ENCODE measurements at regions of chr14 and their contacts with region 1.

Region 1: DNA sequence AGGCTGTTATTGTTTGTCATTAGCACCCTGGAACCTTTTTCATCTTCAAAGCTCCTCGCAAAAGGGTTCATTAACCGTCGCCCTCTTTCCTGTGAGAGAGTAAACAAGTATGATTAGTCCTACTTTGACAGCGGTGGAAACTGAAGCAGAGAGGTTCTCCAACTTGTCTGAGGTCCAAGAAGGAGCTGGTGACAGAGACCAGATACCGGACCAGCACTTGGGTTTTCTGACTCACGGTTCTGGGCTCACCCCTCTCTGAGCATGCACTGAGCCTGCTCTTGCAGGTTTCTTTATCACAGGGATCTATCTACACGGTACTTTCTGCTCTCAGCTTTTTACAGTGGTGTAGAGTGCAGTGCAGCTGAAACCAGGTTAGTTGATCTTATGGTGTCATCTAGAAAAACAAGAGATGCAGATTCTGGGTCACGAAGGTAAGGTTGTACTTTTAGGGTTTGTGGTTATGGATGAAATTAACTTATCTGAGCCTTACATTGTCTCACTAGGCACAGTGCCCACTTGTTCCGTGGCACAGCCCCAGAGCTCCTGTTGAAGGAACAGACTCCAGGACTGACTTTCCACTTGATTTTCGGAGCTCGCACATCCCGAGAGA is 62.1 kb downstream of the PPP2R5C start:
- DNase-seq: peak; percentile 74
- H3K4me3 Mint-ChIP-seq: peak overlapping the region; percentile 78
- H3K27ac Mint-ChIP-seq: peak overlapping the region; percentile 98
- H3K4me1 Mint-ChIP-seq: peaks cover 84% of the 10 kb centered on the region
- H3K27me3 Mint-ChIP-seq: no peaks in the 10 kb centered on the region

Region 2: GRCh38 chr14:101235335-101236103 is 588.1 kb before region 1 on chr14:
- intact Hi-C with region 1: no loop called
- DNase-seq: no peak
- H3K4me3 Mint-ChIP-seq: no peak overlapping the region
- H3K27ac Mint-ChIP-seq: no peak overlapping the region
- H3K4me1 Mint-ChIP-seq: no peaks in the 10 kb centered on the region
- H3K27me3 Mint-ChIP-seq: no peaks in the 10 kb centered on the region

Region 3: DNA sequence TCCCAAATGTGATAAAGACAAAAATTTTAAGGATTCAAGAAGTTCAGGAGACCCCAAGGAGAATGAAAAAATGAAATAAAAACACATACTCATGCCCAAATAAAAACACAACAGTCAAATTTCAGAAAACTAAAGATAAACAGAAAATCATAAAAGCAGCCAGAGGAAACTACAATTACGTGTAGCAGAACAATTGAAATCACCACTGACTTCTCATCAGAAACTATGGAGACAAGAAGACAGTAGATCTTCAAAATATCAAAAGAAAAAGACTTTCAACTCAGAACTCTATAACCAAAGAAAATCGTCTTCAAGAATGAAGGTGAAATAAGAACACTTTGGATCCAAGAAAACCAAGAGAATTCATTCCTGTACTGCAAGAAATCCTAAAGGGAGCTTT is 207.4 kb before region 1 on chr14:
- intact Hi-C with region 1: no loop called
- DNase-seq: no peak
- H3K4me3 Mint-ChIP-seq: no peak overlapping the region
- H3K27ac Mint-ChIP-seq: no peak overlapping the region
- H3K4me1 Mint-ChIP-seq: no peaks in the 10 kb centered on the region
- H3K27me3 Mint-ChIP-seq: peaks cover 36% of the 10 kb centered on the region

Region 4: GRCh38 chr14:101628471-101628966 is 195.1 kb before region 1 on chr14:
- intact Hi-C with region 1: no loop called
- DNase-seq: peak; percentile 64
- H3K4me3 Mint-ChIP-seq: no peak overlapping the region
- H3K27ac Mint-ChIP-seq: no peak overlapping the region
- H3K4me1 Mint-ChIP-seq: no peaks in the 10 kb centered on the region
- H3K27me3 Mint-ChIP-seq: peaks cover 6% of the 10 kb centered on the region

Region 5: GRCh38 chr14:101731187-101732080 is 92.2 kb before region 1 on chr14:
- intact Hi-C with region 1: loop called (anchors 1 kb)
- DNase-seq: peak; percentile 79
- H3K4me3 Mint-ChIP-seq: peak overlapping the region; percentile 51
- H3K27ac Mint-ChIP-seq: peak overlapping the region; percentile 82
- H3K4me1 Mint-ChIP-seq: peaks cover 59% of the 10 kb centered on the region
- H3K27me3 Mint-ChIP-seq: no peaks in the 10 kb centered on the region

Region 6: GRCh38 chr14:101791919-101792572 is 31.6 kb before region 1 on chr14:
- intact Hi-C with region 1: loop called (anchors 2 kb)
- DNase-seq: no peak
- H3K4me3 Mint-ChIP-seq: peak overlapping the region; percentile 52
- H3K27ac Mint-ChIP-seq: peak overlapping the region; percentile 71
- H3K4me1 Mint-ChIP-seq: peaks cover 20% of the 10 kb centered on the region
- H3K27me3 Mint-ChIP-seq: no peaks in the 10 kb centered on the region

Region 7: GRCh38 chr14:101843665-101844064 is 20.0 kb after region 1 on chr14:
- intact Hi-C with region 1: loop called (anchors 2 kb)
- DNase-seq: peak; percentile 28
- H3K4me3 Mint-ChIP-seq: no peak overlapping the region
- H3K27ac Mint-ChIP-seq: peak overlapping the region; percentile 80
- H3K4me1 Mint-ChIP-seq: peaks cover 80% of the 10 kb centered on the region
- H3K27me3 Mint-ChIP-seq: no peaks in the 10 kb centered on the region

Region 8: DNA sequence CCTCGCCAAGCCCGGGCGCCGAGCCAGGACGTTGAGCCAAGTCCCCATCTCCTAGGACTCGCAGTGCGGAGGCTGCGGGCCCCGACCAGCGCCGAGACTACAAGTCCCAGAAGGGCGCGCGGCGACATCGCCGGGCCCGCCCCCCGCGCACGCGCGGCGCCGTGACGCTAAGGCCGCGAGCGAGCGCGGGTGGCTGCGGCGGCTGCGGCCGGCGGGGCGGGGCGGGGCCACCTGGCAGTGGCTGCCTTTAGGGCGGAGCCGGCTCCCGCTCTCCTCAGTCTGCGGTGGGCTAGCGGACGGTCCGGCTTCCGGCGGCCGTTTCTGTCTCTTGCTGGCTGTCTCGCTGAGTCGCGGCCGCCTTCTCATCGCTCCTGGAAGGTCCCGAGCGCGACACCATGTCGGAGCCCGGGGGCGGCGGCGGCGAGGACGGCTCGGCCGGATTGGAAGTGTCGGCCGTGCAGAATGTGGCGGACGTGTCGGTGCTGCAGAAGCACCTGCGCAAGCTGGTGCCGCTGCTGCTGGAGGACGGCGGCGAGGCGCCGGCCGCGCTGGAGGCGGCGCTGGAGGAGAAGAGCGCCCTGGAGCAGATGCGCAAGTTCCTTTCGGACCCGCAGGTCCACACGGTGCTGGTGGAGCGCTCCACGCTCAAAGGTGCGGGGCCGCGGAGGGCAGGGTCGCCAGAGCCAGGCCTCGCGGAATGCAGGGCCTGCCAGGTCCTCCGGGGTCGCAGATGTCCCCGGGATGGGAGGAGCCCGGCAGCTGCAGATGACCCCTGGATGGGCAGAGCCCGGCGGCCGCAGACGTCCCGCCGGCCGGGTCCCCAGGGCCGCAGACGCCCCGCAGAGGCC is 140.9 kb after region 1 on chr14 and contains the start of gene DYNC1H1:
- intact Hi-C with region 1: loop called (anchors 5 kb)
- DNase-seq: peak; percentile 89
- H3K4me3 Mint-ChIP-seq: peak within 1 kb of the TSS; percentile 90
- H3K27ac Mint-ChIP-seq: peak within 1 kb of the TSS; percentile 93
- H3K4me1 Mint-ChIP-seq: peaks cover 38% of the 10 kb centered on the region
- H3K27me3 Mint-ChIP-seq: peaks cover 2% of the 10 kb centered on the region
- total RNA-seq, gene DYNC1H1: 241 and 254 TPM in 2 replicates

Region 9: GRCh38 chr14:102182190-102182589 is 358.6 kb after region 1 on chr14:
- intact Hi-C with region 1: loop called (anchors 5 kb)
- DNase-seq: no peak
- H3K4me3 Mint-ChIP-seq: no peak overlapping the region
- H3K27ac Mint-ChIP-seq: peak overlapping the region; percentile 68
- H3K4me1 Mint-ChIP-seq: peaks cover 50% of the 10 kb centered on the region
- H3K27me3 Mint-ChIP-seq: no peaks in the 10 kb centered on the region